Activated CD4-positive, alpha-beta memory T cell treated with anti-CD3 and anti-CD28 coated beads for 36 hours (primary cell): ENCODE measurements at regions of chr1 and their contacts with region 1.

Region 1: DNA sequence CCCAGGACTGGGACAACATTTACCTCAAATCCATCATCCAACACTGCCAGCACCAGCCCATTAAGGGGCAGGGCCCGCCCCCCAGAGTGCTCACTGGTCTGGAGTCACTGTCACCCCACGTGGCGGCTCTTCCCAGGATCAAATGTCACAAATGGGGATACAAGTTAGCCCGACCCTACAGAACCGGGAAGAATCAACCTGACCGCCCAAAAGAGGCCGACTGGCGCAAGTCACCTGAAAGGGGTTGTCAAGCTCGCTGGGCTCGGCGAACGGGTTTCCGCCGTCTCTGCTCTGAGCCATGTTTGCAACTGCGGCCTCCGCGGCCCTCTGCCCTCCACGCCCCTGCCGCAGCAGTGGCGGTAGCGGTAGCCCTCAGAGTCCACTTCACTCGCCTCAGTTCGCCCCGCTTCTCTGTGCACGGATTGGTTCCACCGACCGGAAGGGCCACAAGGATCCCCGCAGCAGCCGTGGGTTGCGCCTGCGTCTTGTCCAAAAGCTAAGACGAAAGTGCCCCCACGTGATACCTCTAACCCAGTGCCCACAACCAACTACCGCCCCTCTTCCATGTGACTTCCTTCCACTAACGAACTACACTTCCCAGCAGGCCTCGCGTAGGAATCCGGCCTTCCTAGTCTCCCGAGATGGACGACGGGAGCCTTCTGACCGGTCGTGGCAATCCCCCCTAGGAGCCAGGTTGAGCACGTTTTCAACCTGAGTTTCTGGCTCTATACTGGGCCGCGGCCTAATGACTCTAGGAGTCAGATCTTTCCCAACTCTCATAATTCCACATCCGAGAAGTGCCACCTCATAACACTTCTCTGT is at the start of gene SCAMP3:
- DNase-seq: peak; percentile 94
- H3K4me3 Mint-ChIP-seq: peak within 1 kb of the TSS; percentile 98
- H3K27ac Mint-ChIP-seq: peak within 1 kb of the TSS; percentile 88
- H3K4me1 Mint-ChIP-seq: peaks cover 24% of the 10 kb centered on the region
- H3K27me3 Mint-ChIP-seq: no peaks in the 10 kb centered on the region
- total RNA-seq, gene SCAMP3: 89.6 to 91.7 TPM

Region 2: DNA sequence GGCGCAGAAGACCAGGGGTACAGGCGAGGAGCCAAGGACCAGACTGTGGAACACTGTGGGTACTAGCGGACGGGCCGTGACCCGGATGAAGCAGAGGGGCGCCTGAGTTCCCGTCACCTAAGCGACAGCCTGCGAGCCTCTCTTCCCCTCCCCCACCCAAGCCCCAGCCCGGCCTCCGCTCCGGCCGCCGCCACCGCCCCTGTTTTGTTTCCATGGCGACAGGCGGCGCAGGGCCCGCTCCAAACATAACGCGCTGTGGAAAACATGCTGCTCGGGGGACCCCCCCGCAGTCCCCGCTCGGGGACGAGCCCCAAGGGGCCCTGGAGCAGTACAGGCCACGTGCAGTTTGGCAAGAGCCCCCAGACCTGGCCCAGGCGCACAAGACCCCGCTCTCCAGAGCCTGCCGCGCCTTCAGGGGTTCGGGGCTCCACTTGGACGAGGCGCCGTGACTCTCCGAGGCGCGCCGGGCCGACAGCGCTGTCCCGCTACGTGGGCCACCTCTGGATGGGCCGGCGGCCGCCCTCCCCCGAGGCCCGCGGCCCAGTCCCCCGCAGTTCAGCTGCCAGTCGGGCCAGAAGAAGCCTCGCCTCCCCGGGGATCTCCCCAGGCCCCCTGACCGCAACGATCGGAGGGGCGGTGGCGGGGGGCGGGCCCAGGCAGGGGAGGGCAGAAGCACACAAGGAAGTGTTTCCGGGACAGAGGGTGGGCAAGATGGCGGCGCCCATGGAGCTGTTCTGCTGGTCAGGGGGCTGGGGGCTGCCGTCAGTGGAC is 53.3 kb before region 1 on chr1 and contains the start of gene MTX1:
- CTCF ChIA-PET with region 1: interaction called, 11 read pairs
- POLR2A ChIA-PET with region 1: interaction called, 5 read pairs
- intact Hi-C with region 1: no loop called
- DNase-seq: peak; percentile 92
- H3K4me3 Mint-ChIP-seq: peak within 1 kb of the TSS; percentile 83
- H3K27ac Mint-ChIP-seq: peak within 1 kb of the TSS; percentile 89
- H3K4me1 Mint-ChIP-seq: peaks cover 29% of the 10 kb centered on the region
- H3K27me3 Mint-ChIP-seq: no peaks in the 10 kb centered on the region
- total RNA-seq, gene MTX1: 45.2 to 47.9 TPM

Region 3: GRCh38 chr1:155227261-155228095 is 34.6 kb before region 1 on chr1:
- CTCF ChIA-PET with region 1: interaction called, 4 read pairs
- POLR2A ChIA-PET with region 1: no interaction called
- intact Hi-C with region 1: loop called (anchors 1 kb)
- DNase-seq: peak; percentile 100
- H3K4me3 Mint-ChIP-seq: peak overlapping the region; percentile 89
- H3K27ac Mint-ChIP-seq: peak overlapping the region; percentile 98
- H3K4me1 Mint-ChIP-seq: peaks cover 26% of the 10 kb centered on the region
- H3K27me3 Mint-ChIP-seq: no peaks in the 10 kb centered on the region

Region 4: GRCh38 chr1:155277070-155277895 is 15.2 kb after region 1 on chr1 and contains the start of gene HCN3:
- CTCF ChIA-PET with region 1: interaction called, 6 read pairs
- POLR2A ChIA-PET with region 1: interaction called, 14 read pairs
- intact Hi-C with region 1: loop called (anchors 1 kb)
- DNase-seq: peak; percentile 96
- H3K4me3 Mint-ChIP-seq: peak within 1 kb of the TSS; percentile 65
- H3K27ac Mint-ChIP-seq: peak within 1 kb of the TSS; percentile 61
- H3K4me1 Mint-ChIP-seq: peaks cover 32% of the 10 kb centered on the region
- H3K27me3 Mint-ChIP-seq: no peaks in the 10 kb centered on the region
- total RNA-seq, gene HCN3: 1.9 to 2.4 TPM

Region 5: GRCh38 chr1:155295183-155295941 is 33.3 kb after region 1 on chr1:
- CTCF ChIA-PET with region 1: no interaction called
- POLR2A ChIA-PET with region 1: no interaction called
- intact Hi-C with region 1: no loop called
- DNase-seq: no peak
- H3K4me3 Mint-ChIP-seq: no peak overlapping the region
- H3K27ac Mint-ChIP-seq: no peak overlapping the region
- H3K4me1 Mint-ChIP-seq: peaks cover 4% of the 10 kb centered on the region
- H3K27me3 Mint-ChIP-seq: peaks cover 34% of the 10 kb centered on the region

Region 6: DNA sequence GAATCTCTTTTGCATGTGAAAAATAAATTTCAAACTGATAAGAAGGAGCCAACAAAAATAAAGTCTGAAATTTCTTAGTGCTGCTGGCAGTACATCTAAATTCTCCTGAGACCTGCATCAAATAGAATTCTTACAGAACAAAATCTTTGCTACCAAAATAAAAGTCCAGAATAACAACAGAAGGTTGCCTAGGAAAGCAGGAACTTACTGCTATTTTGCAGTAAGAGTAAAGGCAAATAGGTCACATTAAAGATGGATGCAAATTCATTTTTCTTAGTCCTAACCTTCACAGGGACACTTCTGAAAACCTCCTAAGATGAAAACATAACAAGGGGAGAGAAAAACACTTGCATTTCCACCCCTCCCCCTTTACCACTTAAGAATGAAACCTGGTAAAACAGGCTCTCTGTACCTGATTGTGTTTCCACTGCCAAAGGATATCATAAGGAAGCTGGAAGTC is 117.6 kb after region 1 on chr1:
- CTCF ChIA-PET with region 1: no interaction called
- POLR2A ChIA-PET with region 1: no interaction called
- intact Hi-C with region 1: no loop called
- DNase-seq: no peak
- H3K4me3 Mint-ChIP-seq: no peak overlapping the region
- H3K27ac Mint-ChIP-seq: no peak overlapping the region
- H3K4me1 Mint-ChIP-seq: no peaks in the 10 kb centered on the region
- H3K27me3 Mint-ChIP-seq: no peaks in the 10 kb centered on the region

Region 7: GRCh38 chr1:155562581-155563376 is 300.7 kb after region 1 on chr1 and contains the start of gene ASH1L:
- CTCF ChIA-PET with region 1: no interaction called
- POLR2A ChIA-PET with region 1: no interaction called
- intact Hi-C with region 1: loop called (anchors 1 kb)
- DNase-seq: peak; percentile 95
- H3K4me3 Mint-ChIP-seq: peak within 1 kb of the TSS; percentile 99
- H3K27ac Mint-ChIP-seq: peak within 1 kb of the TSS; percentile 98
- H3K4me1 Mint-ChIP-seq: peaks cover 46% of the 10 kb centered on the region
- H3K27me3 Mint-ChIP-seq: no peaks in the 10 kb centered on the region
- total RNA-seq, gene ASH1L: 28.8 to 29.6 TPM